ENCODE measurements at regions of chr1 and their contacts with region 1.

Region 1: GRCh38 chr1:156060937-156061636 is at the start of gene RAB25:
- DNase-seq: peak in 2 of 5 donors; percentile 13 to 22
- ATAC-seq: peak in 1 of 4 donors; percentile 14
- H3K4me3 ChIP-seq: no peak within 1 kb of the TSS
- H3K27ac ChIP-seq: no peak within 1 kb of the TSS
- H3K4me1 ChIP-seq: peaks cover 0 to 7% (median under 1%) of the 10 kb centered on the region in 12 donors
- H3K27me3 ChIP-seq: no peaks in the 10 kb centered on the region
- CTCF ChIP-seq: no peak
- POLR2A ChIP-seq: no peak
- total RNA-seq, gene RAB25: not detected

Region 2: GRCh38 chr1:155911156-155912055 is 149.7 kb before region 1 on chr1 and contains the start of gene RIT1:
- intact Hi-C with region 1: no loop called
- DNase-seq: peak; percentile 90 to 94 (median 91)
- ATAC-seq: peak; percentile 97 to 99 (median 99)
- H3K4me3 ChIP-seq: peak within 1 kb of the TSS; percentile 65 to 97 (median 80)
- H3K27ac ChIP-seq: peak within 1 kb of the TSS; percentile 80 to 95 (median 92)
- H3K4me1 ChIP-seq: peaks cover 0 to 22% (median 10%) of the 10 kb centered on the region in 12 donors
- H3K27me3 ChIP-seq: no peaks in the 10 kb centered on the region
- CTCF ChIP-seq: peak in 2 of 12 donors; percentile 4 to 13
- POLR2A ChIP-seq: peak in 1 of 2 donors; percentile 63
- total RNA-seq, gene RIT1: 15.1 to 33.3 (median 20.0) TPM

Region 3: DNA sequence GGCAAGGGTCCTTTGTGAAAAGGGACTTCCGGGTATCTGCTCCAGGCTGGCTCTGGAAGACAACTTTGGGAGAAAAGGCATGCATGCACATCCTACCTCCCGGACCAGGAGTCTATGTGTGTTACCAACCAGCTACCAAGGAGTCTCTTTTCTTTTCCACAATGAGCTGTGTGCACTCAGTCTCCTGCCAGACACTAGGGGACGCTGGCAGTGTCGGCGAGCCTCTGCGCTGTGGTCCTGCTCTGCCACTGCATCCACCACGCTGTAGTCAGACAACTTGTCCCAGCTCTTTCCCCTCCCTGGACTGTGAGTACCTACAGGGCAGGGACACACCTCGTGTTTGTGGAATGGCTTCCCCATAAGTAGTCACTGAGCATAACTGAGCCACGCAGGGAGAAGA is 35.2 kb before region 1 on chr1:
- intact Hi-C with region 1: loop called in 3 of 10 experiments (anchors 5 kb)
- DNase-seq: peak in 4 of 5 donors; percentile 25 to 65 (median 38)
- ATAC-seq: peak; percentile 54 to 85 (median 78)
- H3K4me3 ChIP-seq: no peak overlapping the region
- H3K27ac ChIP-seq: no peak overlapping the region
- H3K4me1 ChIP-seq: peaks cover 0 to 8% (median 3%) of the 10 kb centered on the region in 12 donors
- H3K27me3 ChIP-seq: no peaks in the 10 kb centered on the region
- CTCF ChIP-seq: peak in 11 of 12 donors; percentile 21 to 57 (median 43)
- POLR2A ChIP-seq: no peak

Region 4: DNA sequence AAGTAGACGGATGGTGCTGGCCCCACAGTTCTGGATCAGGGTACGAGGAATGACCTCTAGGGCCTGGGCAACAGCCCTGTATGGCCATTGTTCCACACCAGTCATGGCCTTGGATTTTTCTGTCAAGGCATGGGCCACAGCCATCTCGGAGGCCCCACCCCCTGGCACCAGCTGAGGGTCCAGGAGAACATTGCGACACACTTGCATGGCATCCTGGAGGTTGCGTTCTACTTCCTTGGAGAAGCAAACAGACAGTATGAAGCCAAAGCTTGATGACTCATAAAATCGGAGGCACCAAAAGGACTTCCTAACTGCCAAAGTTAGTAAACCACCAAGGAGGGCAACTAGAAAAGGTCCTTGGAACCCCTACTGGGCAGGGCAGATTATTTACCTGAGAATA is 249.9 kb after region 1 on chr1:
- intact Hi-C with region 1: no loop called
- DNase-seq: no peak
- ATAC-seq: no peak
- H3K4me3 ChIP-seq: no peak overlapping the region
- H3K27ac ChIP-seq: no peak overlapping the region
- H3K4me1 ChIP-seq: no peaks in the 10 kb centered on the region
- H3K27me3 ChIP-seq: no peaks in the 10 kb centered on the region
- CTCF ChIP-seq: no peak
- POLR2A ChIP-seq: no peak

Region 5: DNA sequence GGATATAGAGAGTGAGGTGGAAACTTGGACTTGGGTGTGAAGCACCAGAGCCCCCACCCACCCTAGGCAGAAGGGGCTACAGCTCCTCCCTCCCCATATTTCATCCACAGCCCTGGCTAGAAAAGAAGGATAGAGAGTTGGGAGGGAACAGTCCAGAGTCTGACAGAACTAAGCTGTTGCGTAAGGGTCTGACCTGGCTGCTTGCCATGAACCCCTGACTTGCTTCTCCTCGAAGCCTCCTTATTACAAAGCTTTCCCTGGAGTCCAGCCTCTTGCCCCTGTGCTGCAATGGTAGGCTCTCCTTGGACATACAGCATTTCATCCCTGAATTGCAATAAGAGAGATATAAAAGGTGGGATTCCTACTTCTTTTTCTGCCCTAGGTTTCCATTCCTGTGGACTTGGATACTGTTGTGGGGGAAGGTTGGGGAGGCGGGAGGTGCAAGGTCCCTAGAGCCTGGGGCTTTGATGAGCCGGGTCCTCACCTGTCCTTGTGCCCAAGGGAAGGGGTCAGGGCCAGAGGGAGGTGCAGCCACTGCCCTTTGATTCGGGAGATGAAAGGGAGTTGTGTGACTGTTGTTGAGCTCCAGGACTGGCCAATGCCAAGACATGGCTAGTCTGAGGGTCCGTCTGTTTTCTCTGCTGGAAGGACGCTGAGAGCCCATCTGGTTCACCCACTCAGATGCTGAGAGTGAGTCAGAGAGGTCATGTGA is 310.6 kb after region 1 on chr1:
- intact Hi-C with region 1: no loop called
- DNase-seq: peak in 3 of 5 donors; percentile 27 to 43 (median 35)
- ATAC-seq: no peak
- H3K4me3 ChIP-seq: no peak overlapping the region
- H3K27ac ChIP-seq: no peak overlapping the region
- H3K4me1 ChIP-seq: peaks cover 0 to 19% (median 7%) of the 10 kb centered on the region in 12 donors
- H3K27me3 ChIP-seq: peaks cover 5 to 40% (median 8%) of the 10 kb centered on the region in 9 donors
- CTCF ChIP-seq: no peak
- POLR2A ChIP-seq: no peak

Region 6: GRCh38 chr1:156480411-156481192 is 419.5 kb after region 1 on chr1:
- intact Hi-C with region 1: no loop called
- DNase-seq: peak; percentile 66 to 86 (median 74)
- ATAC-seq: peak in 3 of 4 donors; percentile 4 to 48 (median 22)
- H3K4me3 ChIP-seq: no peak overlapping the region
- H3K27ac ChIP-seq: peak overlapping the region; percentile 9 to 89 (median 49)
- H3K4me1 ChIP-seq: peaks cover 7 to 98% (median 80%) of the 10 kb centered on the region in 12 donors
- H3K27me3 ChIP-seq: no peaks in the 10 kb centered on the region
- CTCF ChIP-seq: peak; percentile 56 to 78 (median 63)
- POLR2A ChIP-seq: no peak

Measured in heart left ventricle (tissue), 16 donors.